HepG2 (cell line): ENCODE measurements at regions of chr11 and their contacts with region 1.

Region 1: DNA sequence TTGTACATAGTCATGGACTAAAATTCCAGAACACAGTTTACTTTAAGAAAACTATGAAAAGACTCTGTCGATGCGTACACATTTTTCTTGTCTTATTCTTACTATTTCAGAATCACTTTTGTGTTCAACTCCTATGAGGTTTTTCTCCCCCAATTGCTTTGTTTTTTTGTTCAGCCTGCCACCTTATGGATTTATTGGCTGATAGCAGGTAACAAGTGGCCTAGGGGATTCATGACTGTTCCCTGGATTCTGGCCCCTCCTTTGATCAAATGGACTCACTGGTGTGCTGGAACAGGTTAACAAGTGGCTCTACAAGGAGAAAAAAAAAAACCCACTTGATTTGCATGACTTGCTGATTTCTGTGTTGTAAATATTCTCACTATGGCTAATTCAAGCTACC is 10.6 kb downstream of the MMP20 start:
- DNase-seq: no peak
- ATAC-seq: no peak
- H3K4me3 ChIP-seq: no peak overlapping the region
- H3K27ac ChIP-seq: no peak overlapping the region
- H3K4me1 ChIP-seq: peaks cover 41% of the 10 kb centered on the region
- H3K27me3 ChIP-seq: no peaks in the 10 kb centered on the region
- CTCF ChIP-seq: peak; percentile 23; the same call in 1 of the 2 replicates
- EP300 ChIP-seq: no peak
- POLR2A ChIP-seq: no peak
- RAD21 ChIP-seq: no peak

Region 2: DNA sequence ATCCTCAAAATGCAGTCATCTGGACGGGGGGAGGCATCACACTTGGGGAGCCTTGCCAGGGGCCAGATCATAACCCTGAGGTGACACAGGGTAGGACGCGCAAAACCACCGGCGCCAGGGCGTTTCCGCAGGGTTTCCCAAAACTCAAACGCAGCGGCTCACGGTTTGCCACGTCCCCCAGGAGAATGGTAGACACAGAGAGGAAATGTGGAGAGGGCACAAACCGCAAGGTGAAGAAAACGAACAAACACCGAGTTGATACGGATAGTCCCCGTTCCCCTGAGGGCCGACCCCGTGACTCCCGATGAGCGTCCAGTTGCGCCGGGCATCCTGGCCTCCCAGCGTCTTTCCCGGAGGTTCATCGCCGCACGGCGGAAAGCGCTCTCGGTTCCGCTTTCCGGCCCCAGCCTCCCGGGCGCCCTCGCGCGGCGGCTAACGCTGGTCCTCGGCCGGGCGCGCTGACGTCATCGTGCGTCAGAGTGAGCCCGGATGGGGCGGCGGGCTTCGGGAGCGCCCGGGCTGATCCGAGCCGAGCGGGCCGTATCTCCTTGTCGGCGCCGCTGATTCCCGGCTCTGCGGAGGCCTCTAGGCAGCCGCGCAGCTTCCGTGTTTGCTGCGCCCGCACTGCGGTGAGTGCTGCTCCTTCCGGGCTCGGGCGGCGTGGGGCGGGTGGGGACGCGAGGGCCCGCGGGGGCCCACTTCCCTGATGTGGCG is 267.6 kb before region 1 on chr11 and contains the start of gene BIRC2:
- CTCF ChIA-PET with region 1: interaction called, 4 read pairs
- POLR2A ChIA-PET with region 1: no interaction called
- in situ Hi-C with region 1: loop called (anchors 5 kb)
- intact Hi-C with region 1: loop called (anchors 2 kb)
- DNase-seq: peak; percentile 79
- ATAC-seq: peak; percentile 96
- H3K4me3 ChIP-seq: peak within 1 kb of the TSS; percentile 85 to 98 (median 96)
- H3K27ac ChIP-seq: peak within 1 kb of the TSS; percentile 96
- H3K4me1 ChIP-seq: peaks cover 30% of the 10 kb centered on the region
- H3K27me3 ChIP-seq: no peaks in the 10 kb centered on the region; a peak in 1 of 5 replicates
- CTCF ChIP-seq: peak; percentile 95
- EP300 ChIP-seq: peak; percentile 16 to 38; a peak in 1 of 4 replicates
- POLR2A ChIP-seq: peak; percentile 78 to 82
- RAD21 ChIP-seq: peak; percentile 78
- total RNA-seq, gene BIRC2: 61.7 and 83.2 TPM in 2 replicates

Region 3: GRCh38 chr11:102361086-102362031 is 253.1 kb before region 1 on chr11:
- CTCF ChIA-PET with region 1: no interaction called
- POLR2A ChIA-PET with region 1: no interaction called
- in situ Hi-C with region 1: no loop called
- intact Hi-C with region 1: no loop called
- DNase-seq: no peak
- ATAC-seq: peak; percentile 68
- H3K4me3 ChIP-seq: no peak overlapping the region
- H3K27ac ChIP-seq: no peak overlapping the region
- H3K4me1 ChIP-seq: peaks cover 6% of the 10 kb centered on the region; the same call in 1 of the 2 replicates
- H3K27me3 ChIP-seq: no peaks in the 10 kb centered on the region
- CTCF ChIP-seq: no peak
- EP300 ChIP-seq: no peak
- POLR2A ChIP-seq: no peak
- RAD21 ChIP-seq: no peak

Region 4: DNA sequence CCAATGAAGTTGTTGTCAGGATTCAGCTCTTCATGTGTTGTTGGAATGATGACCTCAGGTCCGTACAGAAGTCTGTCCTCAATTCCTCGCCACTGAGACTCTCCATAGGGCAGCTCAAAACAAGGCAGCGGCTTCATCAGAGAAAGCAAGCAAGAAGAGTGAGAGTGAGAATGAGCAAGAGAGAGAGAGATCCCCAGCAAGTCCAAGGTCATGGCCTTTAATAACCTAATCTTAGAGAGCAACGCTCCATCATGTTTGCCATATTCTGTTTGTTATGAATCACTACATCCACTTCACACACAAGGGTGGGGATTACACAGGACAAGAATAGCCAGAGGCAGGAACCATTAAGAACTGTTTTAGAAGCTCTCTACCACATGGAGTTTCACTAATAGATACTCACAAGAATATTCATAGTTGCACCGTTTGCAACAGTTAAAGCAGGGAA is 60.6 kb before region 1 on chr11:
- CTCF ChIA-PET with region 1: no interaction called
- POLR2A ChIA-PET with region 1: interaction called, 3 read pairs
- in situ Hi-C with region 1: no loop called
- intact Hi-C with region 1: loop called (anchors 5 kb)
- DNase-seq: peak; percentile 68
- ATAC-seq: peak; percentile 63
- H3K4me3 ChIP-seq: no peak overlapping the region
- H3K27ac ChIP-seq: no peak overlapping the region
- H3K4me1 ChIP-seq: peaks cover 12% of the 10 kb centered on the region
- H3K27me3 ChIP-seq: 0 out of 5 replicates have a peak, but pooled peaks cover 0 to 4% of the 10 kb centered on the region in 2 experiments
- CTCF ChIP-seq: no peak
- EP300 ChIP-seq: peak in 1 of 2 experiments; percentile 44; a peak in 1 of 4 replicates
- POLR2A ChIP-seq: no peak
- RAD21 ChIP-seq: no peak

Region 5: DNA sequence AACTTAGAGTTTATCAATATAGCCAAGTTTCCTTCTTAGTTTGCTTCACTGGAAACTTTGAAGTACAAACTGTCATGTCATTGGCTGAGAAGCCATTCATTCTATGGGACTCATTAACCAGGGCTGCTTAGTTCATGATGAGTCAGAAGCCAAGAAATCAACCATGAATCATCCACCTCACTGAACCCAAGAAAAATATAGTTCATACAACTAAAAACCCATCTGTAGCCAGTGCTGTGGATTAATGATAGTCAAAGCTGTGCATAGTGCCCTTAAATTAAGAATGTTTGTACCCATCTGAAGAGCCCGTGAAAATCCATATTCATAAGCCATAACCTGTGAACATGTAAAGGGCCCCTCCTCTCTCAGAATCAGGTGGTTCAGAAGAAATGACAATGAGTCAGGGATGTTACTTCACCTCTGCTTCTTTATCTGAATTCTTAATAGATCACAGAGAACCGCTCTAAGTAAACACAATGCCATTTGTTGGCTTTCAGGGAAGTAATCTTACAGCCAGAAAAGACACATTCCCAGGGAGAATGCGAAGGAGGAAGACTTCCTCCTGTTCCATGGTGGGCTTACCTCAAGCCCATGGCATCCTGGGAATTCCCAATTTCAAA is 14.7 kb before region 1 on chr11:
- CTCF ChIA-PET with region 1: interaction called, 3 read pairs
- POLR2A ChIA-PET with region 1: interaction called, 30 read pairs
- in situ Hi-C with region 1: no loop called
- intact Hi-C with region 1: no loop called
- DNase-seq: peak; percentile 89
- ATAC-seq: peak; percentile 61
- H3K4me3 ChIP-seq: no peak overlapping the region; a peak in 1 of 6 replicates
- H3K27ac ChIP-seq: peak overlapping the region; percentile 71
- H3K4me1 ChIP-seq: peaks cover 80% of the 10 kb centered on the region
- H3K27me3 ChIP-seq: no peaks in the 10 kb centered on the region
- CTCF ChIP-seq: no peak
- EP300 ChIP-seq: peak in 1 of 2 experiments; percentile 70; a peak in 2 of 4 replicates
- POLR2A ChIP-seq: no peak
- RAD21 ChIP-seq: no peak

Region 6: GRCh38 chr11:102900346-102900745 is 285.9 kb after region 1 on chr11:
- CTCF ChIA-PET with region 1: no interaction called
- POLR2A ChIA-PET with region 1: no interaction called
- in situ Hi-C with region 1: no loop called
- intact Hi-C with region 1: no loop called
- DNase-seq: no peak
- ATAC-seq: no peak
- H3K4me3 ChIP-seq: no peak overlapping the region
- H3K27ac ChIP-seq: no peak overlapping the region
- H3K4me1 ChIP-seq: no peaks in the 10 kb centered on the region
- H3K27me3 ChIP-seq: no peaks in the 10 kb centered on the region
- CTCF ChIP-seq: no peak
- EP300 ChIP-seq: no peak
- POLR2A ChIP-seq: no peak
- RAD21 ChIP-seq: no peak